Pancreas (tissue), 10 donors: ENCODE measurements at regions of chr1 and their contacts with region 1.

Region 1: DNA sequence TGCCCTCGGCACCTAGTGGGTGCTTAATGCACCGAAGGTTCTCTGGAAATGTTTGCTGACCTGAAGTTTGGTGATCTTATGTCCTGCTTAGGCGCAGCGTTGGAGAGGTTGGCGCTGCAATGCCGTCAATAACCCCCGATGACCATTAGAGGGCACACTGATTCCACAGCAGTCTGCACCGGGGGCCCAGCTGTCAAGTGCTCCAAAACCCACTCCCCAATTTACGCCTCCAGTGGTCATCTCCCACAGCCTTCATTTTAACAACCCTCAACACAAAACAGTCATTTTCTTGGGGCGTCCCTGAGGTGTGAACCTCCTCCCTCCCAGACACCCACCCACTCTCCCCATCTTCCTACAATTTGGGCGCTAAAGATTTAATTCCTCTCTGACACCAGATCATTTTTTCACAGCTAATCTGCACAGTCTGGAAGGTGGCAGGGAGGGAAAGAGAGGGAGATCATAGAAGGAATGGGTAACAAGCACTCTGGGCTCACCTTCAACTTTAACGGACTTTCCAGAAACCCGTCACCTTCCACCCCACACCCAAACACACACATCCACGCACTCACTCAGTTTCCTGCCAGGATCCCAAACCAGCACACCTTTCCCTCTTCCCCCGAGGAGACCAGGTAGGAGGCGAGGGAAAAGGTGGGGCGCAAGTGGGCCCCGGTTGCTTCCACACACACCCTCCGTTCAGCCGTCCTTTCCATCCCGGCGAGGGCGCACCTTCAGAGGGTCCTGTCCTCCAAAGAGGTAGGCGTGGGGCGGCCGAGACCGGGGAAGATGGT is 576 bp upstream of the NPR1 start:
- DNase-seq: peak in 3 of 6 donors; percentile 32 to 62 (median 51)
- ATAC-seq: peak; percentile 61 to 87 (median 82)
- H3K4me3 ChIP-seq: peak overlapping the region in 3 of 4 donors; percentile 6 to 56 (median 36)
- H3K27ac ChIP-seq: no peak overlapping the region
- H3K4me1 ChIP-seq: peaks cover 0 to 11% (median 5%) of the 10 kb centered on the region in 3 donors
- H3K27me3 ChIP-seq: no peaks in the 10 kb centered on the region
- CTCF ChIP-seq: peak; percentile 64 to 88 (median 79)

Region 2: DNA sequence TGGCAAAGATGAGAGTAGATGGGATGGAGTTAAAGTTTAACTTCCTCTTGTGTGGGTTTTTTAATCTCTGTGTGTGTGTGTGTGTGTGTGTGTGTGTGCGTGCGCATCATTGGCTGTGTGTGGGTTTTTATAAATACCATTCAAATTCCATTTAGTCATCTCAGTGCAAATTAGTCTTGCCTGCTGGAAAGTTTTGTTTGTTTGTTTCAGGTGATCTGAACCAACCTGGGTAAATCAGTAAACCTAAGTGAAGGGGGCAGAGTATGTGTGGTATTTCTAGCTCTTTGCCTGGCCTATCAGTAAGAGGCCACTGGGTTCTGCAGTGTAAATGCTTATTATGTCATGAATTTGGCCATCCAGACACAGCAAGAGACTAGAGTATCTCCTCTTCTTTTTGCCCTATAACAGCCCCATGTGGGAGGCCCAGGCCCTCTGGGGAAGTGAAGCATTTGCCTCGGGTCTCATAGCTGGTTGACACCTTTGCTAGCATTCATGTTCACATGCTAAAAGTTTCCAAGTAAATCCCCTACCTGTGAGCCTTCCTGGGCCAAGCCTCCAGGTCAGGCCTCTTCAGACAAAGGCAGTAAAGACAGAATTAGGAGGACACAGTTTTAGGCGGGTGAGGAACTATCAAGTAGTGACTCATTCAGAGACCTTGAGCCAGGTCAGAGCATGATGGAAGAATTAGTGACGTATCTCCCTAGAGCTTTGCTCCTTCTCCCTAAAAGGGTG is 64.7 kb after region 1 on chr1:
- intact Hi-C with region 1: loop called in 1 of 3 experiments (anchors 5 kb)
- DNase-seq: peak in 4 of 6 donors; percentile 38 to 60 (median 54)
- ATAC-seq: peak; percentile 81 to 93 (median 86)
- H3K4me3 ChIP-seq: no peak overlapping the region
- H3K27ac ChIP-seq: peak overlapping the region; percentile 49 to 83 (median 70)
- H3K4me1 ChIP-seq: peaks cover 0 to 15% (median 11%) of the 10 kb centered on the region in 3 donors
- H3K27me3 ChIP-seq: no peaks in the 10 kb centered on the region
- CTCF ChIP-seq: no peak

Region 3: DNA sequence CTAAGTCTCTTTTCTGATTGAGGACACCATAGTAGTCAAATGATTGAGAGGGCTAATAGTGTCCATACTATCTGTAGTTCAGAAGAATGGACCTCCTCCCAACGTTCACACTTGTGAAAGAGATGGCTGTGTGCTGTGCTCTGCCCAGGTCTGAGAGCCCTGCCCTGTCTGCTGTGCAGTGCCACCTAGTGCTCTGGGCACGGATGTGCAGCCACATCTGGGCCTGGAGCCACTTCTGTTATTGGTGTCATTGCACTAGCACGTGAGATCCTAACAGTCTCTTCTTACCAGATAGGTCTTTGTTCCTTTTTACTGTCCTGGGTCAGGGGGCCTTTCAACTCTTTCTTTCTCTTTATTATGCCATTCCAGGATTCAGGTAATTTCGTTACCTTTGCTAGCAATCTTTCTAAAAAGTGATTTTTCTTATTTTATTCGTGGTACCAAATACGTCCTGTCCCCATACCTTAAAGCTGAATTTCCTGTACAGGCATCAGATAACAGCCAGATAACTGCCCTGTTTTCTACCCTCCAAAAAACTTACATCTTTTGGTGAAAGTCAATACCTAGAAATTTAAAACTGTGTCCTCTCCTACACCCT is 71.6 kb after region 1 on chr1:
- intact Hi-C with region 1: loop called in 2 of 3 experiments (anchors 2 to 5 kb)
- DNase-seq: peak; percentile 70 to 92 (median 83)
- ATAC-seq: peak; percentile 92 to 99 (median 98)
- H3K4me3 ChIP-seq: no peak overlapping the region
- H3K27ac ChIP-seq: no peak overlapping the region
- H3K4me1 ChIP-seq: peaks cover 0 to 2% (median 0%) of the 10 kb centered on the region in 3 donors
- H3K27me3 ChIP-seq: no peaks in the 10 kb centered on the region
- CTCF ChIP-seq: peak; percentile 87 to 91 (median 90)